ENCODE measurements at regions of chr11 and their contacts with region 1.

Region 1: DNA sequence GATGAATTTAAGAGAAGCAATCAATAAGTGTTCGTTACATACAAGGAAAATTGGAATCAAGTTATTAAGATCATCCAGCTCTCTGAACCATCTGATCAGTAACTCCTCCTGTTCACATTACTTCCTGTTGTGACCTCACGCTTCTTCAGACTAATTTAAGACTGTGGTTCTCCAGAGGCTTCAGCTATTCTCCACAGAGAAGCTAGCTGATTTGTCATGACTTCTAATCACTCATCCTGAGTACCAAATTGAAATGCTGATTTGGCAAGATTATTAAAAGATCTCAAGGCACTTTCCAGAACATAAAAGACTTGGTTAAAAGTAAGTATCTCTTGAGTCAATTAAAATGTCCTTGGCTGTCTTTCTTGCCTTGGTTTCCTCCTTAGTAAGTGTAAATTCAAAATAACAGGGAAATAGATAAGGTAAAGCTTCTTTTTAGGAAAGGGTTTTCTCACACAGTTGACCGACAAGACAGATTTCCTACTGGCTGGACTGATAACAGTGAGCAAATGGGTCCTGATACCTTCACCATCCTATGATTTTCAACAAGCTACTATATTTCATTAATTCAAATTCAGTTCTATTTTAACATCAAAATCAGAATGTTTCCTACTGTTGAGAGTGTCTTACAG is 38.5 kb downstream of the GAB2 start:
- DNase-seq: peak in 2 of 4 experiments; percentile 25 to 55
- ATAC-seq: peak; percentile 57
- H3K4me3 ChIP-seq: no peak overlapping the region
- H3K27ac ChIP-seq: peak overlapping the region; percentile 63; the same call in 1 of the 3 replicates
- H3K4me1 ChIP-seq: peaks cover 5 to 44% of the 10 kb centered on the region in 2 experiments
- H3K27me3 ChIP-seq: no peaks in the 10 kb centered on the region
- CTCF ChIP-seq: no peak
- EP300 ChIP-seq: no peak
- POLR2A ChIP-seq: no peak
- RAD21 ChIP-seq: no peak

Region 2: DNA sequence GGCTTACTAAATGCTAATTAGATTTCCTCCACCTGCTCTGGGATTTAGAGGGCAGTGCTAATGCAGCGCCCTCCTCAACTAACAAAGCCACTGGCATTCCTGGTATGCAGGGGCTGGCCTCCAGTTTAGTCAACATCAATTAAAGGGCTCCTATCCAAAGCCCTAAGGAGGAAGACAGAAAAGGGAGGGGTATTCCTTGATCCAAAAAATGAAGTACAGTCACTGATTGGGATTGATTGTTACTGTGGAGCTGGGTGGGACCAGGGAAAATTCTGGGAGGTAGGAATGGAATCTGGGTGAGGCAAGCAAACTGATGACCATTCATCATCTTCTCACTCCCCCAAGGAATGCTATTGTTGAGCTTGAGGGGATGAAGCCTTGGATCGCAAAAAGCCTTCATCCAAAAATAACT is 13.8 kb before region 1 on chr11:
- CTCF ChIA-PET with region 1: no interaction called
- POLR2A ChIA-PET with region 1: interaction called, 12 read pairs
- in situ Hi-C with region 1: no loop called
- intact Hi-C with region 1: no loop called
- DNase-seq: no peak
- ATAC-seq: no peak
- H3K4me3 ChIP-seq: no peak overlapping the region
- H3K27ac ChIP-seq: no peak overlapping the region
- H3K4me1 ChIP-seq: peaks cover 3 to 4% of the 10 kb centered on the region in 2 experiments; a peak in 3 of 5 replicates
- H3K27me3 ChIP-seq: no peaks in the 10 kb centered on the region
- CTCF ChIP-seq: no peak
- EP300 ChIP-seq: no peak
- POLR2A ChIP-seq: no peak
- RAD21 ChIP-seq: no peak

Region 3: DNA sequence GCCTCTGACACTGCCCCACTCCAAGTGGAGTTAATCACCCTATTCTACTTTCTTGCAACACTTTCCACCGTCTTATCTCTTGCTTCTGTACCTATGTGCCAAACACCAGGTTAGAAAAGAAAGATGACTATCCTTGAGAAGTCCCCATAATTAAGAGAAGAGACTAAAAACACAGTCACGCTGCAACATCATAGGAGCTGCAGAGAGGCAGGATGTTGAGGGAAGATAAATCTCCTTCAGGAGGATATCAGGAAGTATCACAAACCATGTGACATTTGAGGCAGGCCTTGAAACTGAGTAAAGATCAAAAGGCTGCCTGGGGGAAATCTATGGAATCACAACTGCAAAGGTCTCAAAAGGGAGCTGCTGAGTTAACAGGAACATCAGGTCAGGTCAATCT is 13.7 kb after region 1 on chr11:
- CTCF ChIA-PET with region 1: no interaction called
- POLR2A ChIA-PET with region 1: interaction called, 7 read pairs
- in situ Hi-C with region 1: no loop called
- intact Hi-C with region 1: loop called (anchors 1 kb)
- DNase-seq: peak in 2 of 4 experiments; percentile 69 to 83
- ATAC-seq: peak; percentile 83
- H3K4me3 ChIP-seq: no peak overlapping the region
- H3K27ac ChIP-seq: no peak overlapping the region
- H3K4me1 ChIP-seq: peaks cover 24 to 33% of the 10 kb centered on the region in 2 experiments
- H3K27me3 ChIP-seq: no peaks in the 10 kb centered on the region
- CTCF ChIP-seq: no peak
- EP300 ChIP-seq: peak; percentile 85
- POLR2A ChIP-seq: no peak
- RAD21 ChIP-seq: 0 out of 4 replicates have a peak, but pooled peaks of 1 of the 2 experiments have one; percentile 20

Region 4: DNA sequence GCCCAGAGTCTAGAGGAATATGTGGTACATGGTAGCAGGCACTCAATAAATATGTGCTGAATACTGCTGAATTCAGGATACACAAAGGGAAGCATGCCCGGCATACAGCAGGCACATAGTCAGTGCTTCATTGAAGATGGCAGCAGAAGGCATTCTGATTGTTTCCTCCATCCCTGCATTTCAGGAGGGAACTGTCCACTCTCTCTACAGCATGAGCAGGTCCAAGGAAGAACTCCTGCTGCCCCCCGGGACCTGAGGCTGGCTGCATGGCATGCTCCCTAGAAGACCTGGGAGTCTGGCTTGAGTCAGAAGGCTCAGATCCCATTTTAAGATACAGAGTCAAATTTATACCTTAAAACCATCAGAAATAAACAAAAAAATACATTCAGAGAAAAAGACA is 514.8 kb after region 1 on chr11:
- CTCF ChIA-PET with region 1: no interaction called
- POLR2A ChIA-PET with region 1: no interaction called
- in situ Hi-C with region 1: no loop called
- intact Hi-C with region 1: no loop called
- DNase-seq: no peak
- ATAC-seq: no peak
- H3K4me3 ChIP-seq: no peak overlapping the region
- H3K27ac ChIP-seq: no peak overlapping the region
- H3K4me1 ChIP-seq: no peaks in the 10 kb centered on the region
- H3K27me3 ChIP-seq: peaks cover 0 to 6% of the 10 kb centered on the region in 2 experiments; a peak in 1 of 5 replicates
- CTCF ChIP-seq: no peak
- EP300 ChIP-seq: no peak
- POLR2A ChIP-seq: no peak
- RAD21 ChIP-seq: no peak

Measured in K562 (cell line).